Ascending aorta (tissue), 2 donors: ENCODE measurements at regions of chr3 and their contacts with region 1.

Region 1: GRCh38 chr3:141738022-141738890 is at the start of gene RNF7:
- DNase-seq: peak; percentile 85 to 98
- H3K4me3 ChIP-seq: peak within 1 kb of the TSS; percentile 91 to 97
- H3K27ac ChIP-seq: peak within 1 kb of the TSS; percentile 93 to 99
- H3K4me1 ChIP-seq: peaks cover 0 to 24% of the 10 kb centered on the region in 2 donors
- H3K27me3 ChIP-seq: no peaks in the 10 kb centered on the region
- CTCF ChIP-seq: peak; percentile 87 to 97 (median 89)
- total RNA-seq, gene RNF7: 32.1 TPM

Region 2: DNA sequence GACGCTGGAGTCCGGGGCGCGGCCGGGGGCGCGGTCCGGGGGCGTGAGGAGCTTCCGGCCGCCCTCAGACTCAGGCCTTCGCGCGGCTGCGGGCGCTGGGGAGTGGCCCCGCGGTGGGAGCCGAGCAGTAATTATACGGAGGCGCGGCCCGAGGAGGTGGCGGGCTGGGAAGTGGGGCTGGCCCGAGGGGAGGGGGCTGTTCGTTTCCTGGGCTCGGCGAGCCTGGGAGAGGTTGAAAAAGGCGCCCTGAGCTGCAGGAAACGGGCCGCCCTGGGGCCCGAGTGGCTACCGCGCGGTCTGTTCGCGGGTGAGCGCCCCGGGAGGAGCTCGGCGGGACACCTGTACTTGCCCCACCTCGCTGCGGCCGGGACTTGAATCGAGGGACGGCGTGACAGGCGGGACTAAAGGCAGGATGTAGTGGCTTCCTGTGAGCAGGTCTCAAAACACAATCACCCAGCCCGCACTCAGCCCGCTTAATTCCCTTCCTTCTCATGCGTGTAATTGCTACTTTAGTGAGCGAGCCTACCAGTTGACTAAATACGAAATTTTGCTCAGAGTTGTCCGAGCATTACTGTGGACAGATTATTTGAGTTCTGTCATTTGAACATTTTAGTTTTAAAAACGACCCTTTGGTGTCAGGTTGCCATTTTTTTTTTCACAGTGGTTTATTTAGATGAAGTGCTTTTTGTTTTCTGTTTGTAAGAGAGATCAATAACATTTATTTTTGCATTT is 250.6 kb before region 1 on chr3:
- intact Hi-C with region 1: loop called (anchors 5 kb)
- DNase-seq: peak; percentile 45 to 84
- H3K4me3 ChIP-seq: peak overlapping the region; percentile 87 to 88
- H3K27ac ChIP-seq: peak overlapping the region; percentile 88 to 95
- H3K4me1 ChIP-seq: peaks cover 3 to 8% of the 10 kb centered on the region in 2 donors
- H3K27me3 ChIP-seq: no peaks in the 10 kb centered on the region
- CTCF ChIP-seq: no peak

Region 3: DNA sequence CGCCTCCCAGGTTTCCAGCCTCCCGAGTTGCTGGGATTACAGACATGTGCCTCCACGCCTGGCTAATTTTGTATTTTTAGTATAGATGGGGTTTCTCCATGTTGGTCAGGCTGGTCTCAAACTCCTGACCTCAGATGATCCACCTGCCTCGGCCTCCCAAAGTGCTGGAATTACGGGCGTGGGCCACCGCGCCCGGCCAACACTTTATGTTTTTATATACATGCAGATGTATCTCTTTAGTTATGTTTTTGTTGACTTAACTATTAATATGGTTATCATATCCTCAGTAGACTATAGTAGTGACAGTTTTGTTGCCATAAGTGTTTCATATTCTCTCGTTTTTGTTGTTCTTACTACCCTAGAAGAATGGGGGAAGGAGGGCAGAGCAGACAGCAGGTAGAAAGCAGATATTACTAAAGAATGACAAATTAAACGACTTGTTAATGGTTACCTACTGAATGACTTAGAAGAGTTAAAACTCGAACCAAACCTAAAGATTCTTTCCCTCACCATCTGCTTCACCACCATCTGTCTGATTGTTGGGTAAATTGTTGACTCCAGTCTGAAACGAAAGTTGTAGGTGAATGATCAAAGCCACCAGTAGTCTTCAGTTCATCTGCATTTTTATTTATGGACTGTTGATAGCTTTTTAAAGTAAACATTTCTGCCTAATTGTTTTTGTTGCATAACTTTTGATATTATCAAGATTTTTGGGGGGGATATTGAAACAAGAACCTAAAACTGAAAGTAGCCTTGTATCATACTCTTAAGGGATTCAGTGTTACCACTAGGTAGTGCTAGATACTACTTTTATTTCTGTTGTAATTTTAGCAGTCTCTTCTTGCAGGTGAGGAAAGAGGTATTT is 162.1 kb before region 1 on chr3:
- intact Hi-C with region 1: loop called (anchors 1 kb)
- DNase-seq: no peak
- H3K4me3 ChIP-seq: peak overlapping the region in 1 of 2 donors; percentile 13
- H3K27ac ChIP-seq: no peak overlapping the region
- H3K4me1 ChIP-seq: no peaks in the 10 kb centered on the region
- H3K27me3 ChIP-seq: no peaks in the 10 kb centered on the region
- CTCF ChIP-seq: peak; percentile 25 to 59 (median 54)

Region 4: DNA sequence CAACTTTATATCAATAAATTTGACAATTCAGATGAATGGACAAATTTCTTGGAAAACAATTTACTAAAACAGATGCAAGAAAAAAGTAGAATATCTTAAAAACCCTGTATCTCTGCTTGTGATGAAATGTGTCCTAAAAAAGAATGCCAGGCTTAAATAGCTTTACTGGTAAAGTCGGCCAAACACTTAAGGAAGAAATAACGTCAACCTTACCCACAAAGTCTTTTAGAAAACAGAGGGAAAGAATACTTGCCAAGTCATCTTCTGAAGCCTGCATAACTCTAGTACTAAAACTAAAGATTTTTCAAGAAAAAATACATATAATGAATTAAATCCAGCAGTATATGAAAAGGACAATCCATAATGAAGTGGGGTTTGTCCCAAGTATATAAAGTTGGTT is 140.3 kb before region 1 on chr3:
- intact Hi-C with region 1: loop called (anchors 5 kb)
- DNase-seq: no peak
- H3K4me3 ChIP-seq: no peak overlapping the region
- H3K27ac ChIP-seq: peak overlapping the region; percentile 8 to 67
- H3K4me1 ChIP-seq: peaks cover 0 to 15% of the 10 kb centered on the region in 2 donors
- H3K27me3 ChIP-seq: no peaks in the 10 kb centered on the region
- CTCF ChIP-seq: no peak

Region 5: GRCh38 chr3:141659821-141660613 is 78.2 kb before region 1 on chr3:
- intact Hi-C with region 1: loop called (anchors 5 kb)
- DNase-seq: peak in 1 of 2 donors; percentile 76
- H3K4me3 ChIP-seq: peak overlapping the region; percentile 63 to 94
- H3K27ac ChIP-seq: peak overlapping the region; percentile 58 to 84
- H3K4me1 ChIP-seq: peaks cover 0 to 2% of the 10 kb centered on the region in 2 donors
- H3K27me3 ChIP-seq: no peaks in the 10 kb centered on the region
- CTCF ChIP-seq: no peak

Region 6: GRCh38 chr3:141710573-141711251 is 27.5 kb before region 1 on chr3:
- intact Hi-C with region 1: loop called (anchors 1 kb)
- DNase-seq: peak; percentile 30 to 83
- H3K4me3 ChIP-seq: no peak overlapping the region
- H3K27ac ChIP-seq: peak overlapping the region; percentile 82 to 89
- H3K4me1 ChIP-seq: peaks cover 8 to 19% of the 10 kb centered on the region in 2 donors
- H3K27me3 ChIP-seq: no peaks in the 10 kb centered on the region
- CTCF ChIP-seq: no peak

Region 7: DNA sequence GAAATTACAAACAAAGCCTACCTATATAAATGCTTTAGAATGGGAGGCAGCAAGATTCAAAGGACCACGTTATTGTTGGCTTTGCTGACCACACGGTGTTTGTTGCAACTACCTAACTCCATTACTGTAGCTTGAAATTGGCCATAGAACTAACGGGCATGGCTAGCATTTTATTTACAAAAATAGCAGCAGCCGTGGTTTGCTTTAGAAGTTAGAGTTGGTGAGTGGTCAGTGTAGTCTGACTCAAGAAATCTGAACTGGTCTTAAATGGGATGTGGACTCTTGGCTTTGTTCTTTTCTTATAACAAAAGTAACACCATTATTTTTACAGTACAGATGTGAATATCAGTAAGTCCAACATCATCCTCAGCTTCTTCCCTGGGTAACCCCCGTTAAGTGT is 148.8 kb after region 1 on chr3:
- intact Hi-C with region 1: no loop called
- DNase-seq: no peak
- H3K4me3 ChIP-seq: no peak overlapping the region
- H3K27ac ChIP-seq: no peak overlapping the region
- H3K4me1 ChIP-seq: no peaks in the 10 kb centered on the region
- H3K27me3 ChIP-seq: no peaks in the 10 kb centered on the region
- CTCF ChIP-seq: no peak

Region 8: GRCh38 chr3:141913150-141913811 is 175.0 kb after region 1 on chr3:
- intact Hi-C with region 1: loop called (anchors 1 kb)
- DNase-seq: no peak
- H3K4me3 ChIP-seq: no peak overlapping the region
- H3K27ac ChIP-seq: no peak overlapping the region
- H3K4me1 ChIP-seq: no peaks in the 10 kb centered on the region
- H3K27me3 ChIP-seq: no peaks in the 10 kb centered on the region
- CTCF ChIP-seq: peak; percentile 52 to 55 (median 53)

Region 9: DNA sequence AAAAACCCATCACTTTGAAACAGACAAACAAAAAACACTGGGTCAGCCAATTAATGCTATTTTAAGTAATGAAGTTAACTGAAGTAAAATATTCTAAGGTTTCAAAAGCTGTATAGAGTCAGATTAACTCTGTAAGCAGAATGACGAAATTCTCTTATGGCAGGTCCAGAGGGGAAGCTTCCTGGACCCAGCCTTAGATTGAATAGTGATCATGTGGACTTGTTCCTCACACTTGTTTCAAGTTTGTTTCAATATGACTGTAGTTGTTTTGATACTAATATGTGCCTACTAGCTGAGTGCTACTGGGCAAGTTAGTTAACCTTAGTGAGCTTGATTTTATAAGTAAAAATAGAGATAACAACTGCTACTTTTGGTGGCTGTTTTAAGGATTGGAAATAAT is 890.5 kb after region 1 on chr3:
- intact Hi-C with region 1: no loop called
- DNase-seq: no peak
- H3K4me3 ChIP-seq: no peak overlapping the region
- H3K27ac ChIP-seq: no peak overlapping the region
- H3K4me1 ChIP-seq: no peaks in the 10 kb centered on the region
- H3K27me3 ChIP-seq: no peaks in the 10 kb centered on the region
- CTCF ChIP-seq: no peak